Kidney (tissue), 22 donors: ENCODE measurements at regions of chr13 and their contacts with region 1.

Region 1: DNA sequence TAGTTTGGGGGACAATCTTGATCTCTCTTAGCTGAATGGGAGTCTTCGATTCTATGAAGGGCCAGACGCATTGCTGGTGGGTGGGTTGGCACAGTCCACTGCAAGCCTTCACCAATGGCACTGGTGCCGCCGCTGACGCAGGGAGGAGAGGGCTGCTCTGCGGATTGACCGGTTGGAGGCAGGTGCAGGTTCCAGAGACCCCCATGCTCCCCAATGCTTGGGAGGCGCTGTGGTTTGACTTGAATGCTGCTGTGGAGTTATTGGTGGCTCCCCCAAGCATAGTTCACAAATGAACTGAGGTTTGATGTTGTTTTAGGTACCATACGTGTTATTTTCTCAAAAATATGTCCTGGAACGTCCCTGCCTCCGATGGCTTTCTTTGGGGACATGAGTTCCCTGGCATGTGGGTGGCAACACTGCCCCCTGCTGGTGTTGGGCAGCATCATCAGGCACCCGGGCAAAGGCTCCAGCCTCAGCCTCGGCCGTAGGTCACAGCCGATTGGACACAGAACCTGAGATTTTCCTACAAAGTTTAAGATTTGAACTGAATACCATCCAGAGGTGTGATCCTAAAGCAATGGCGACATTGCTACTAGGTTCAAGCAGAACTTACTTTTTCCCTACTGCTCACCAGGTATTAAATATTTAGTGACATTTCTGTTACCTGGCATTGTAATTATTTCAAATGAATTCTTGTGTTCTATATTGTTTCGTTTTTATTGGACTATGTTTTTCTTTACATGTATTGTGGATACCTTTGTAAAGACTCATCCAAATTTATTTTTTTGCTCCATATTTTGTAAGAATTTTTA is 95.5 kb downstream of the ANKRD10 start:
- DNase-seq: peak; percentile 87 to 91 (median 88)
- H3K4me3 ChIP-seq: no peak overlapping the region
- H3K27ac ChIP-seq: no peak overlapping the region
- H3K4me1 ChIP-seq: peaks cover 0 to 4% (median 3%) of the 10 kb centered on the region in 3 donors
- H3K27me3 ChIP-seq: no peaks in the 10 kb centered on the region
- CTCF ChIP-seq: peak; percentile 93

Region 2: DNA sequence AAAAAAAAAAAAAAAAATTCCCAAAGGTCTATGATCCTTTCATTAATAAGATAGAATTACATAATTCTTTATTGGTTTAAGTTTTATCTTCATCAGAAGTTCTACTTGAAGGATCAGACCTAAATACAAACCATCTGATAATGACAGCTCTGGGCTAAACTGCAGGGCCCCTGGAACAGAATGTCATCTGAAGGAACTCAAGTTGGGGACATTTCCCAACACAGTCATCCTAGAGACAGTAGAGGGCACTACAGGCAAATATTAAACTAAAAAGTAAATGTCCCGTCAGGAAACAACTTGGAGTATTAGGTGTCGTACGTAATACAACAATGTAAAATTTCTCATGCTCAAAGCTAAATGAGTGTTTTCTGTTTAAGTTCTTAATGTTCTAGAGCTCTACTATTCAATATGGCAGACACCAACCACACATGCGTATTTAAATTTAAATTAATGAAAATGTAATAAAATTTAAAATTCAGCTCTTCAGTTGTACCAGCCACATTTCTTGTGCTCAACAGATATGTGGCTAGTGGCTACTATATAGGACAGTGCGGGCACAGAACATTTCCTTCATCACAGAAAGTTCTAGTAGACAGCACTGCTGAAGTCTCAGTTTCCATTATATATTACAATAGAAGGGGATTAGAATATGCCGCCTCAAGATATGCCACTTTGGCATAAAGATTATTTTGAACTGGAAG is 225.8 kb before region 1 on chr13:
- intact Hi-C with region 1: loop called (anchors 10 kb)
- DNase-seq: peak in 2 of 5 donors; percentile 82 to 86
- H3K4me3 ChIP-seq: no peak overlapping the region
- H3K27ac ChIP-seq: no peak overlapping the region
- H3K4me1 ChIP-seq: peaks cover 0 to 4% (median 0%) of the 10 kb centered on the region in 3 donors
- H3K27me3 ChIP-seq: no peaks in the 10 kb centered on the region
- CTCF ChIP-seq: peak; percentile 69